Activated B cell treated with CpG ODN at 0.5 μM for 24 hours (primary cell): ENCODE measurements at regions of chr2 and their contacts with region 1.

Region 1: DNA sequence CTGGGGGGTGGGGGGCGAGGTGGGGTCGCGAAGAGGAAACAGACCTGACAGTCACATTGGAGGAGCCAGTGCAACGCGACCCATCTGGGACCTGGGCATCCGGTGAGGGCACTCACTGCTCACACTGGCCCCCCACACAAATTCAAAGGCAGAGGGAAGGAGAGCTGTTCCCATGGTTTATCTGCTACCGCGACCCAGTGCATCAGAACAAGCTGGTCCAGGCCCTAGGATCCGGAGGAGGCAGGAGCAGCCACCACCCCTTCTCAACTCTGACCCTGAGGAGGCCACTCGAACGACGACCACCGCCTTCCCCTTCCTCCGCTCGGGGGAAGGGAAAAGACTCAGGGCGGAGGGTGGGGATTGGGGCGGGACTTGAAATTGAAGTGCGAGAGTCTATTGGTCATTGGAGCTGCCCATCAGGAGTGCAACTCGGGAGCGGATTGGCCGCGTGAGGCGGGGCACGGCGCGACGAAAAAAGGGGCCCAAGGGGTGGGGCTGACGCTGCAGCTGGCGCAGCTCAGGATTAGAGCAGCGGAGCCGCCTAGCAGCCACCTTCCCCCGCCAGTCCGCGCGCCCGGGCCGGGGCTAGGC is at the start of gene CDK5R2:
- DNase-seq: peak; percentile 66
- ATAC-seq: peak; percentile 99
- H3K4me3 Mint-ChIP-seq: peak within 1 kb of the TSS; percentile 69
- H3K27ac Mint-ChIP-seq: no peak within 1 kb of the TSS
- H3K4me1 Mint-ChIP-seq: peaks cover 15% of the 10 kb centered on the region
- H3K27me3 Mint-ChIP-seq: peaks cover 55% of the 10 kb centered on the region
- CTCF ChIP-seq: no peak
- total RNA-seq, gene CDK5R2: 0.07 TPM in 1 of 2 replicates, not detected in the other

Region 2: DNA sequence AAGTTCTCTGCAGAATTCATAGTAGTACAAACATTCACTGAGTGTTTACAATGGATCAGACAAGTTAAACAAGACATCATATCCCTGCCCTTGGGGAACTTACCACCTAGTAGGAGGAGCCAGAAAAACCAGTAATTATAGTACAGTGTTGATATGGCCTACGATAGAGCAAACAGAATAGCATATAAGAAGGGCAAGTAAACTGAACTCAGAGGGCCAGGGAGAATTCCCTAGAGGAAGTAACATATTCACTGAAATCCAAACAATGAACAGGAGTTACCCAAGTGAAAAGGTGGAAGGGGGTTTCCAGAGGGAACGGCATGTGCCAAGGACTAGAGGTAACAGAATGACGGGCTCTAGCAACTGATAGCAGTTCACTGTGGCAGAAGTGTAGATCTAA is 167.3 kb after region 1 on chr2:
- CTCF ChIA-PET with region 1: no interaction called
- POLR2A ChIA-PET with region 1: no interaction called
- intact Hi-C with region 1: no loop called
- DNase-seq: no peak
- ATAC-seq: no peak
- H3K4me3 Mint-ChIP-seq: no peak overlapping the region
- H3K27ac Mint-ChIP-seq: no peak overlapping the region
- H3K4me1 Mint-ChIP-seq: no peaks in the 10 kb centered on the region
- H3K27me3 Mint-ChIP-seq: no peaks in the 10 kb centered on the region
- CTCF ChIP-seq: no peak

Region 3: GRCh38 chr2:219308142-219309093 is 349.2 kb after region 1 on chr2:
- CTCF ChIA-PET with region 1: no interaction called
- POLR2A ChIA-PET with region 1: no interaction called
- intact Hi-C with region 1: loop called (anchors 5 kb)
- DNase-seq: peak; percentile 61
- ATAC-seq: peak; percentile 77
- H3K4me3 Mint-ChIP-seq: no peak overlapping the region
- H3K27ac Mint-ChIP-seq: no peak overlapping the region
- H3K4me1 Mint-ChIP-seq: peaks cover 3% of the 10 kb centered on the region
- H3K27me3 Mint-ChIP-seq: peaks cover 64% of the 10 kb centered on the region
- CTCF ChIP-seq: no peak